ENCODE measurements at regions of chr5 and their contacts with region 1.

Region 1: DNA sequence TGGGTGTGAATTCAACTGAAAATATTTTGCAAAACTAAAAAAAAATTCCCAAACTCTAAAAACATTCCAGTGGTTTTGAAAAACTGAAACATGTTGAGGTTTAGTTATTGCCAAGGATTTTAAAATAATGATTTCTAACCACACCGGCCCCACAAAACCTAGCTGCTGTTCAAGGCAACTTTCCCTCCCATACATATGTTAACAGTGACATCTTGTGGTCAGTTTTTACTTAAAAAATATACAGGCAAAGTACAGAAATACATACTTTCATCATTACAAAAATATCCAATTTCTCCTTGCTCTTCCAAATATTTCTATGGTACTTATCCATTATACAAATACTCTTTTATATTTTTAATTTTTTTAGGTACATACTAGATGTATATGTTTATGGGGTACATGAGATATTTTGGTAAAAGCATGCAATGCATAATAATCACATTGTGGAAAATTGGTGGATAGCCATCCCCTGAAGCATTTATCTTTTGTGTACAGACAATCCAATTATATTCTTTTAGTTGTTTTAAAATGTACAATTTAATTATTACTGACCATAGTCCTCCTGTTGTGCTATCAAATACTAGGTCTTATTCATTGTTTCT is 34.4 kb upstream of the MRPS30 start:
- DNase-seq: no peak
- ATAC-seq: peak in 3 of 4 donors; percentile 53 to 81 (median 64)
- H3K4me3 ChIP-seq: no peak overlapping the region
- H3K27ac ChIP-seq: no peak overlapping the region
- H3K4me1 ChIP-seq: no peaks in the 10 kb centered on the region
- H3K27me3 ChIP-seq: no peaks in the 10 kb centered on the region
- CTCF ChIP-seq: peak; percentile 66

Region 2: DNA sequence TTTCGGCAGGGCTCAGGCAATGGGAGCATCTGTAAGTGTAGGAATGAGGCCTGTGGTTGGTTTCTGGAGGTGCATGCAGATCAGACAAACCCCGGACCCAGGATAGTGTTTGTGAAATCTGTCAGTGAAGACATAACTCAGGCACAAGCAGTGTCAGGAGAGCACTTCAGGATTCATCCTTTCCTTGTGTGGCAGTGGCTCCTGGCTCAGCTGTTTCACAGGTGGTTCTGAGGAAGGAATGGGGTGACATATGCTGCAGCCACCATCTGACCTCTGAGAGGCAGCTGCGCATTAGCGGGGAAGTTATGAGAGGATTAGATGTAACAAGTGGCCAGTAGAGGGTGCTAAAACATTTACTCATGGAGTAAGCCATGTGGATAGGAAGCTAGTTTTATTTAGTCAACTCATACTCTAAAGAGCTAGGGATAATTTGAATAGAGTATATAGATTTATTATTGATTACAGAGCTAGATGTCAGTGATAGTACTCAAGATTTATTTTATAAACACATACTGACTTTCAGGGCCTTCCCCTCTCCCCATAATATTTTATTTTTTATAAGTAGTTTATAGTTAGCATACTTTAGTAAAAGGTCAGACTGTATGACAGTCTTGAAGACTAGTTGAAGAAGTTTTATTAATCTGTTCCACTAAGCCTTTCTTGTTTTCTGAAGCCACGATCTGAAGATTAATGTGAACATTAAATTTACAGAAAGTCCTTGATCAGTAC is 1143.0 kb before region 1 on chr5:
- intact Hi-C with region 1: loop called in 1 of 2 experiments (anchors 10 kb)
- DNase-seq: peak; percentile 47 to 66
- ATAC-seq: peak; percentile 86 to 95 (median 88)
- H3K4me3 ChIP-seq: no peak overlapping the region
- H3K27ac ChIP-seq: peak overlapping the region; percentile 72
- H3K4me1 ChIP-seq: peaks cover 45% of the 10 kb centered on the region
- H3K27me3 ChIP-seq: no peaks in the 10 kb centered on the region
- CTCF ChIP-seq: peak; percentile 76

Region 3: DNA sequence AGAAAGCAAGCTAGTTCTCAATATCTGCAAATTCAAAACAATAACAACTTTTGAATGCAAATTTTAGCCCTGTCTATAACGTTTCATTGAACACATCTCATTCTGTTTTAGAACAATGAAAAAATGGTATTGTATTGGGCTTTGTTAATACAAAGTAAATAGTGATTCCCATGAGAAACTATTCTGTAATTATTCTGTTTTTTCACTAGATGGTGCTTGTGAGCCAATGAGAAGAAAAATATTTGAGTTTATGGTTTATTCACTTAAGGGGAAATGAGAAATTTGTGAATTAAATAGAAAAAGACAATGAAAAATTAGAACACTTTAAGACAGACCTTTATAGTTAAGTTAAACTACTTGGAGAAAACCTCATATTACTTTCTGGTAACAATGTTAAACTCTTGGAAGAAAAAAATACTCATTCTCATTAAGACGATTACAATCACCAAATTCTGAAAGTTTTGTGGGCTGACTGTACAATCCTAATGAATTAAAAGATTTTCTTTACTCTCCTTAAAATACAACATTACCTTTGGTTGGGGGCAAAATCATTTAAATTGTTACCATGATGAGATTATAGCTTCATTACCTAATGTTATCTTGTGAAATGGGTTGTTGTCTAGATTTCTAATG is 1044.4 kb before region 1 on chr5:
- intact Hi-C with region 1: loop called (anchors 5 to 10 kb)
- DNase-seq: no peak
- ATAC-seq: no peak
- H3K4me3 ChIP-seq: no peak overlapping the region
- H3K27ac ChIP-seq: no peak overlapping the region
- H3K4me1 ChIP-seq: no peaks in the 10 kb centered on the region
- H3K27me3 ChIP-seq: no peaks in the 10 kb centered on the region
- CTCF ChIP-seq: peak; percentile 55

Region 4: GRCh38 chr5:44536650-44537260 is 237.6 kb before region 1 on chr5:
- intact Hi-C with region 1: loop called (anchors 1 to 2 kb)
- DNase-seq: no peak
- ATAC-seq: peak in 3 of 4 donors; percentile 55 to 75 (median 59)
- H3K4me3 ChIP-seq: no peak overlapping the region
- H3K27ac ChIP-seq: no peak overlapping the region
- H3K4me1 ChIP-seq: peaks cover 15% of the 10 kb centered on the region
- H3K27me3 ChIP-seq: no peaks in the 10 kb centered on the region
- CTCF ChIP-seq: peak; percentile 80

Region 5: GRCh38 chr5:45110399-45110798 is 336.0 kb after region 1 on chr5:
- intact Hi-C with region 1: no loop called
- DNase-seq: no peak
- ATAC-seq: no peak
- H3K4me3 ChIP-seq: no peak overlapping the region
- H3K27ac ChIP-seq: no peak overlapping the region
- H3K4me1 ChIP-seq: no peaks in the 10 kb centered on the region
- H3K27me3 ChIP-seq: no peaks in the 10 kb centered on the region
- CTCF ChIP-seq: no peak

Measured in psoas muscle (tissue), 8 donors.